Colonic mucosa (tissue), 4 donors: ENCODE measurements at regions of chr12 and their contacts with region 1.

Region 1: DNA sequence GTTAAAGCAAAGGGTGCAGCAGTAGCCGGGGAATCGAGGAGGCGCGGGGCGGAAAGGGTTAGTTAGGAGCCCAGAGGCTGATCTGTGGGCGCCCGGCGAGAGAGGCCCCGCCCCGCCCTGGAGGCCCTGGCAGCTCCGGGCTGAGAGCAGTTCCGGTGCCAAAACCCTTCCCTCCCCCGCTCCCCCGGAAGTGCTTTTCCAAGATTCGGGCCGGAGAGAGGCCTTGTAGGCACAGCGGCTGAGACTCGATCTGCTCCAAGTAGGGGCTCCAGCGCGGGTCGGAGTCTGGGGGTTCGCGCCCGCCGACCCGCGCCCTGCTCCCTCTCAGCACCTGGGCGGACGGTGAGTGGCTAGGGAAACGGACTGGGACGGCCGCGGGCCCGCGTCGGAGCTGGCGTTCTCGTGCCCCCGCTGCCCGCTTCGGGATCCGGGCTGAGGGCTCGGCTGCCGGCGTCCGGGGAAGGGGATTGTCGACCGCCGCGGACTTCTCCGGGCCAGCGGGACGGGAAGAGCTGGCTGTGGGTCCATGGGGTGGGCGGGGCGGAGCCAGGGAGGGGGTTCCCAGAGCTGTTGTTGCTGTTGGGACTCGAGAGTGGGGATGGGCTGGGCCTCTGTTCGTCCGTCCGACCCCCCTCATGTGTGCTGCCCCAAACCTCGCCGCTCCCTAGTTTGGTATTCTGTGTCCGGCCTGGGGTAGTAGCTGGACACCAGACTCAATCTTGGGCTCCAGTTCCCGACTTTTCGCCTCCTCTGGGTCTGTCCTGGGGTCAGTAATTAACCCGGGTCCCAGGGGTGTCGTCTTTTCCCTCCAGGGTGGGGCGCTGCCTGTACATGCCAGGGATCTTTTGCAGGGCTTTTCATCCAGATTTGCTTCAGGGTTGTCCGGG is at the start of gene FRS2:
- DNase-seq: peak; percentile 95
- H3K4me3 ChIP-seq: peak within 1 kb of the TSS; percentile 82
- H3K27ac ChIP-seq: peak within 1 kb of the TSS; percentile 80
- H3K4me1 ChIP-seq: peaks cover 7% of the 10 kb centered on the region
- H3K27me3 ChIP-seq: no peaks in the 10 kb centered on the region
- CTCF ChIP-seq: no peak
- total RNA-seq, gene FRS2: 22.4 to 28.4 TPM

Region 2: DNA sequence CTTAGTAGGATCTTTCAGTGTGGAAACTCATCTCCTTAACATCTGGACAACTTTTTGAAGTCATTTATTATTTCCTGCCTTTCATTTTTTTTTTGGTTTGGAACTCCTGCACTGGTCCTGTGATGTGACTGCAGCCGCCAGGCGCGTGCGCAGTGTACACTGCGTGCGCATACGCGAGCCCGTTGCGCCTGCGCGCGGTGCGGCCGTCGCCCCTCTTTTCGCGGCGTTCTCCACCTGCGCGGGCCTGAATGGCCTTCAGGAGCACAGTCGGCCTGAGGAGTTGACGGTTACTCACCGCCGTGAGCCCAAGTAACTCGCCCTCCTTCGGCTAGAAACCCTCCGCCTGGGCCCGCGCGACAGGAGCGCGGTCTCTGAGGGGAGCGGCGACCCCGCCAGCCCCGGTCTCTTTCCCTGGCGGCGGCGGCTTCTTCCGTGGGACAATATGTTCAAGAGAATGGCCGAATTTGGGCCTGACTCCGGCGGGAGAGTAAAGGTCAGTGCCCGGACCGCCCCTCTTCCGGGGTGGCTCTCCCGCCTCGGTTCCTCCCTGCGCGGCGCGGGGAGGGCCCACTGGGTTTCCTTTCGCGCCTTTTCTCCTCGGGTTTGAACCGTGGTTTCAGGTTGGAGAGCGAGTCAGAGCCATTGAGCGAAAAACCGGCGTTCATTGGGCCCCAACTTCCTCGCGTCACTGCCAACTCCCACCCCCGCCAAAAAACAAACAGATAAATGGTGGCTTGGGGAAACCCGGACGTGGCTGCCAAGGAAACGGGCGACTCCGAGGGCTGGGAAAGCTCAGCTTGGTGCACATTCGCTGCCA is 110.7 kb before region 1 on chr12 and contains the start of gene YEATS4:
- intact Hi-C with region 1: loop called (anchors 10 kb)
- DNase-seq: peak; percentile 94
- H3K4me3 ChIP-seq: peak within 1 kb of the TSS; percentile 94
- H3K27ac ChIP-seq: peak within 1 kb of the TSS; percentile 100
- H3K4me1 ChIP-seq: peaks cover 4% of the 10 kb centered on the region
- H3K27me3 ChIP-seq: no peaks in the 10 kb centered on the region
- CTCF ChIP-seq: no peak
- total RNA-seq, gene YEATS4: 16.4 to 18.2 TPM

Region 3: GRCh38 chr12:69509308-69509736 is 38.9 kb after region 1 on chr12:
- intact Hi-C with region 1: no loop called
- DNase-seq: no peak
- H3K4me3 ChIP-seq: no peak overlapping the region
- H3K27ac ChIP-seq: no peak overlapping the region
- H3K4me1 ChIP-seq: no peaks in the 10 kb centered on the region
- H3K27me3 ChIP-seq: no peaks in the 10 kb centered on the region
- CTCF ChIP-seq: no peak

Region 4: GRCh38 chr12:69570545-69571399 is 100.3 kb after region 1 on chr12:
- intact Hi-C with region 1: loop called (anchors 5 kb)
- DNase-seq: peak; percentile 58
- H3K4me3 ChIP-seq: no peak overlapping the region
- H3K27ac ChIP-seq: no peak overlapping the region
- H3K4me1 ChIP-seq: no peaks in the 10 kb centered on the region
- H3K27me3 ChIP-seq: no peaks in the 10 kb centered on the region
- CTCF ChIP-seq: peak; percentile 82